Activated T-helper 1 cell treated with anti-CD3 and anti-CD28 coated beads, Interleukin-12 subunit alpha, Interleukin-12 subunit beta, Interleukin-2, Interleukin-4 antibody, amounts not matched to agents 30 ng/mL and 10 ng/mL and 1 ng/mL, durations not matched to agents 14 hours and 24 hours and 36 hours (primary cell): ENCODE measurements at regions of chr5 and their contacts with region 1.

Region 1: DNA sequence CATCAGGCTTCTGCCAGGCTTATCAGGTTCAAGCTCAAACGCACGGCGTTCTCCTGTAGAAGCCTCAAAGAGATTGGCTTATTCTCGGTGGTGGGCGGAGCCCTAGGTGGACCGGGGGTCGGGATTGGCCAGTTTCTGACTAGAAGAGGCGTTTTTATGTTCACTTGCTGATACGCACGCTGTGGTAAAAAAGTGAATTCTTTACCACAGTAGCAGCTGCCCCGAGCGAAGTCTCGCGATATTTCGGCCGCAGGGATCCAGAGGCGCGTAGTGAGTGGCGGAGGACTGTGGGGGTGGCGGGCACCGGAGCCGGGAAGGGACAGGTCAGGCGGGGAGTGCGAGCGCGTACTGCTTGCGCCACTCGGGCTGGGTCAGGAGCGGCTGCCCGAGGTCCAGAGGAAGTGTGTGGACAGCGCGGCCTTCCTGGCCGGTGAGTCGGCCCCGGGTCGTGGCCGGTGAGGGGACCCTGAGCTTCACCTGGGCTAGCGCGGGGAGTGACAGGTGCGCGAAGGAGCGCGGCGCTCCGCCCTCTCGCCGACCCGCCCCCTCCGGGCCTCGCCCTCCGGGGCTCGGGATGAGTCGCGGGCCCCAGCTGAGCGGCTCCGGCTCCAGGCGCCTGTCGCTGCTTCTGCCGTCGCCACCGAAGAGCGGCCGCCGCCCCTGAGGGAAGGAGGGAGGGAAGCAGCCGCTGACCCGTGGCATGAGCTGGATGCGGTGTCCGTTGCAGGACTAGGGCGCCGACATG is at the start of gene DMXL1:
- DNase-seq: peak; percentile 96
- H3K4me3 Mint-ChIP-seq: peak within 1 kb of the TSS; percentile 94
- H3K27ac Mint-ChIP-seq: peak within 1 kb of the TSS; percentile 98
- H3K4me1 Mint-ChIP-seq: peaks cover 36% of the 10 kb centered on the region
- H3K27me3 Mint-ChIP-seq: no peaks in the 10 kb centered on the region
- total RNA-seq, gene DMXL1: 26.7 and 28.2 TPM in 2 replicates

Region 2: DNA sequence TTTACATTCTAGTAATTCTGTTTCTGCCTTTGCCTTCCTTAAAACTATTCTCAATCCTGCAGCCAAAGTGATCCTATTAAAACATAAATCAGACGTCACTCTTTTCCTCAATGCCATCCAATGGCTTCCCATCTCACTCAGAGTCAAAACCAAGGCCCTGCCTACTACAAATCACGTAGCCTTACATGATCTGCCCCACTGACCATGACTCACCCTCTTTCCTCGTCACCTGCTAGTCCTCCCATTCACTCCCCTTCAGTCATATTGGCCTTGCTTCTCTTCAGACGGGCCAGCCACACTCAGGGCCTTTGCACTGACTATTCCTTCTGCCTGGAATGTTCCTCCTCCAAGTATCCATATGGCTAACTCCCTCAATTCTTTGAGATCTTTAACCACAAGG is 39.1 kb before region 1 on chr5:
- intact Hi-C with region 1: loop called (anchors 1 kb)
- DNase-seq: no peak
- H3K4me3 Mint-ChIP-seq: peak overlapping the region; percentile 45
- H3K27ac Mint-ChIP-seq: peak overlapping the region; percentile 21
- H3K4me1 Mint-ChIP-seq: peaks cover 35% of the 10 kb centered on the region
- H3K27me3 Mint-ChIP-seq: peaks cover 2% of the 10 kb centered on the region

Region 3: DNA sequence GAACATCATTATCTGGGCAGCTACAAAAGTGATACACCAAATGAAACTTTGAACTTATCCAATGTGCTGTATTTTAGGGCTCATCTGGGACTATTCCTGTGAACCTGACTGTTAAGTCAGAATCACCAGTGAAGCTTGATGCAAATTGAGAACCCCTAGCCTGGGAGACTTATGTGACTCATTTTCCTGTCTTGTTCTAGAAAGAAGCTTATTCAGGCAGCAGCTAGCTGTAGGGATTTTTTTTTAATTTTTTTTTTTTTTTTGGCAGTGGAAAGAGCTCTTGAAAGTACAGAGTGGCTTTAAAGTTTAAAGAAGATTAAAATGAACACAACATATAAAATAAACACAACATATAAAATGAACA is 203.7 kb after region 1 on chr5:
- intact Hi-C with region 1: loop called (anchors 1 kb)
- DNase-seq: no peak
- H3K4me3 Mint-ChIP-seq: peak overlapping the region; percentile 99
- H3K27ac Mint-ChIP-seq: peak overlapping the region; percentile 95
- H3K4me1 Mint-ChIP-seq: peaks cover 98% of the 10 kb centered on the region
- H3K27me3 Mint-ChIP-seq: no peaks in the 10 kb centered on the region

Region 4: GRCh38 chr5:119328753-119329602 is 258.0 kb after region 1 on chr5:
- intact Hi-C with region 1: loop called (anchors 2 kb)
- DNase-seq: peak; percentile 52
- H3K4me3 Mint-ChIP-seq: peak overlapping the region; percentile 52
- H3K27ac Mint-ChIP-seq: peak overlapping the region; percentile 95
- H3K4me1 Mint-ChIP-seq: peaks cover 91% of the 10 kb centered on the region
- H3K27me3 Mint-ChIP-seq: no peaks in the 10 kb centered on the region

Region 5: GRCh38 chr5:119367502-119368237 is 296.7 kb after region 1 on chr5:
- intact Hi-C with region 1: loop called (anchors 1 kb)
- DNase-seq: no peak
- H3K4me3 Mint-ChIP-seq: peak overlapping the region; percentile 84
- H3K27ac Mint-ChIP-seq: peak overlapping the region; percentile 95
- H3K4me1 Mint-ChIP-seq: peaks cover 85% of the 10 kb centered on the region
- H3K27me3 Mint-ChIP-seq: no peaks in the 10 kb centered on the region

Region 6: DNA sequence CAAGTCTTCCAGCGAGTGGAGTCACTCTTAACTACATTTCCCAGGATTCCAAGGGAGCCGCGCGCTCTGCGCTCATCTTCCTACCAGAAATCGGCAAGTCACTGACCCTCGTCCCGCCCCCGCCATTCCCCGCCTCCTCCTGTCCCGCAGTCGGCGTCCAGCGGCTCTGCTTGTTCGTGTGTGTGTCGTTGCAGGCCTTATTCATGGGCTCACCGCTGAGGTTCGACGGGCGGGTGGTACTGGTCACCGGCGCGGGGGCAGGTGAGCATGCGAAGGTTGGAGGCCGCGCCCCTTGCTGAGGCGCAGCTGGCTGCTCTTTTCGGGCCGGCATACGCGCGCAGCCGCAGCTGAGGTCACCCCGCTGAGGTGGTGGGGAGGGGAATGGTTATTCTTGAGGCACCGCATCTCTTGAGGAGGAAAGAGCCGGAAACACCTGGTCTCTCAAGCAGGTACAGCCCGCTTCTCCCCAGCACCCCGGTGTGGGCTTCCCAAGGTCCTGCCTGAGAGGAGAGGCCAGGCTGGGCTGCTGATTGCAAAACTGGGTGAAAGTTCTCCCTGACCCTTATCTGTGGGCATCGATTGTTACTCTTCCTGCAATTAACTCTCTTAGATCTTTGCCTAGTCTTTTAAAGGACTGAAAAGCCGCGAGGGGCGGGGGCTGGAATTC is 381.5 kb after region 1 on chr5 and contains the start of gene HSD17B4:
- intact Hi-C with region 1: loop called (anchors 1 kb)
- DNase-seq: peak; percentile 72
- H3K4me3 Mint-ChIP-seq: peak within 1 kb of the TSS; percentile 93
- H3K27ac Mint-ChIP-seq: peak within 1 kb of the TSS; percentile 88
- H3K4me1 Mint-ChIP-seq: peaks cover 20% of the 10 kb centered on the region
- H3K27me3 Mint-ChIP-seq: peaks cover 8% of the 10 kb centered on the region
- total RNA-seq, gene HSD17B4: 65.6 and 78.2 TPM in 2 replicates